Heart right ventricle (tissue), 16 donors: ENCODE measurements at regions of chr9 and their contacts with region 1.

Region 1: GRCh38 chr9:121763561-121764370 is 112.3 kb downstream of the DAB2IP start:
- DNase-seq: no peak
- ATAC-seq: no peak
- H3K4me3 ChIP-seq: no peak overlapping the region
- H3K27ac ChIP-seq: peak overlapping the region in 9 of 10 donors; percentile 62 to 86 (median 75)
- H3K4me1 ChIP-seq: peaks cover 16 to 44% (median 28%) of the 10 kb centered on the region in 9 donors
- H3K27me3 ChIP-seq: no peaks in the 10 kb centered on the region
- CTCF ChIP-seq: no peak

Region 2: GRCh38 chr9:121709798-121710197 is 54.0 kb before region 1 on chr9:
- intact Hi-C with region 1: loop called in 1 of 10 experiments (anchors 5 kb)
- DNase-seq: peak; percentile 29 to 52
- ATAC-seq: peak; percentile 43 to 80 (median 64)
- H3K4me3 ChIP-seq: no peak overlapping the region
- H3K27ac ChIP-seq: peak overlapping the region in 5 of 10 donors; percentile 2 to 61 (median 47)
- H3K4me1 ChIP-seq: peaks cover 13 to 93% (median 53%) of the 10 kb centered on the region in 9 donors
- H3K27me3 ChIP-seq: no peaks in the 10 kb centered on the region
- CTCF ChIP-seq: no peak

Region 3: DNA sequence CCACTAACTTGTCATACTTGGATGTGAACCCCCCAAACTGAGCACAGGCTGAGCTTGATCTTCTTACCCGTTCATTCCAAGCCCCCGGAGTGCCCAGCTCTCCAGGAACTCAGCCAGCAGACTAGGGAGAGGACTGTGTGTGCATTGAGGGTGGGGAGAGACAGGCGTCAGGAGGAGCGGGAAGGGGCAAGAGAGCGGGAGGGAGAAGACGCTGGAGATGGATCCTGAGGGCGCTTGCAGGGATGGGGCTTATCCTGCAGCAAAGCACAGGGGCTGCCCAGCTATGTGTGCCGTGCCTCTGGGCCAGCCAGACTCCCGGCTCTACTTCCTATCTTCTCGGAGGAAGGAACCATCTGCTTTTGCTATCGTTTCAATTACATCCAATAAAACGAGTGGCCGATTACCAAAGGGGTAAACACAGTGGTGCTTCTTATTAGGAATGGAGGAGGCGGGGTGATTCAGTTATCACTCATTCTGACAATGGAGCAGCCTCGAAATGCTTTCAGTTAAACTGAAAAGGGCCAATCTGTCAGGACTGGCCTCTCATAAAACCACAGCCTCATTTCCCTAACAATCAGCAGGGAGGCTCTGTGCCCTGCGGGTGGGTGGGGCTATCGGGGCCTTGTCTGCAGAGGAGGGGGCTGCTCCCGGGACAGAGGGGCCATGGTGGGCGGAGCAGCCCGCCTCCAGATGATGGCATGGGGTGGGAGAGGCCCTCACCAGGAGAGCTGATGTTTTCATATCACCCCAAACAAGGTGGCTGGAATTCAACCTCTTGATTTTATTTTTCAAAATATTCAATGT is 55.9 kb after region 1 on chr9:
- intact Hi-C with region 1: no loop called
- DNase-seq: no peak
- ATAC-seq: peak in 3 of 8 donors; percentile 6 to 40 (median 38)
- H3K4me3 ChIP-seq: peak overlapping the region in 2 of 10 donors; percentile 0 to 17
- H3K27ac ChIP-seq: no peak overlapping the region
- H3K4me1 ChIP-seq: peaks cover 0 to 26% (median 7%) of the 10 kb centered on the region in 9 donors
- H3K27me3 ChIP-seq: no peaks in the 10 kb centered on the region
- CTCF ChIP-seq: no peak